ENCODE measurements at regions of chr10 and their contacts with region 1.

Region 1: DNA sequence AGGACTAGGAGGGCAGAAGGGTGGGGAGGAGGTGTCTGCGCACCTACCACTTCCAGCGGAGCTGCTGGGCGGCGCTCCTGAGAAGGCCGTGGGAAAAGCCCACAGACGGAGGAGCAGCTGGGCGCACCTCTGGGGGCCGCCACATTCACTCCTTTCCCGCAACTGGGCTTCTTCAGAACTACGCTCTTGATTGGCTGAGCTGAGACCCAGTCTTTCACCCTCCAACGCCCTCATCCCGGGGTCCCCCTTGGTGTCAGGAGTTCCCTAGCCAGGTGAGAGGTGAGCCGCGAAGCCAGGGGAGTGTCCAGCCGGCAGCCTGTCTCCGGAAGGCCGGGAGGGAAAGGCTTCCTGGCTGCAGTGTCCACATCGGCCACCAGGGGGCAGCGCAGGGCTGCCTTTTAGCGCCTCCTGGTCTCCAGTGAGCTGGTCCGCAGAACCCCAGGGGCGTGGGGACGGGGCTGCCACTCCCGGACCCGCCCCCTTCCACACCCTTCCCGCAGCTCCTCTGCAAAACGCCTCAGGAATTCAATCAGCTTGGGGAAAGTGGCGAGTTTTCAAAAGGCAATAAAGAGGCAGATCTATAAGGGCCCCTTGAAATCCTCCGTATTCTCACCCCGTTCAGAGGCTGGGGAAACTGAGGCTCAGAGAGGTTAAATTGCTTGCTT is 98.8 kb downstream of the CHST15 start:
- DNase-seq: peak; percentile 95
- H3K4me3 Mint-ChIP-seq: peak overlapping the region; percentile 55
- H3K27ac Mint-ChIP-seq: no peak overlapping the region
- H3K4me1 Mint-ChIP-seq: peaks cover 6% of the 10 kb centered on the region
- H3K27me3 Mint-ChIP-seq: peaks cover 62% of the 10 kb centered on the region

Region 2: DNA sequence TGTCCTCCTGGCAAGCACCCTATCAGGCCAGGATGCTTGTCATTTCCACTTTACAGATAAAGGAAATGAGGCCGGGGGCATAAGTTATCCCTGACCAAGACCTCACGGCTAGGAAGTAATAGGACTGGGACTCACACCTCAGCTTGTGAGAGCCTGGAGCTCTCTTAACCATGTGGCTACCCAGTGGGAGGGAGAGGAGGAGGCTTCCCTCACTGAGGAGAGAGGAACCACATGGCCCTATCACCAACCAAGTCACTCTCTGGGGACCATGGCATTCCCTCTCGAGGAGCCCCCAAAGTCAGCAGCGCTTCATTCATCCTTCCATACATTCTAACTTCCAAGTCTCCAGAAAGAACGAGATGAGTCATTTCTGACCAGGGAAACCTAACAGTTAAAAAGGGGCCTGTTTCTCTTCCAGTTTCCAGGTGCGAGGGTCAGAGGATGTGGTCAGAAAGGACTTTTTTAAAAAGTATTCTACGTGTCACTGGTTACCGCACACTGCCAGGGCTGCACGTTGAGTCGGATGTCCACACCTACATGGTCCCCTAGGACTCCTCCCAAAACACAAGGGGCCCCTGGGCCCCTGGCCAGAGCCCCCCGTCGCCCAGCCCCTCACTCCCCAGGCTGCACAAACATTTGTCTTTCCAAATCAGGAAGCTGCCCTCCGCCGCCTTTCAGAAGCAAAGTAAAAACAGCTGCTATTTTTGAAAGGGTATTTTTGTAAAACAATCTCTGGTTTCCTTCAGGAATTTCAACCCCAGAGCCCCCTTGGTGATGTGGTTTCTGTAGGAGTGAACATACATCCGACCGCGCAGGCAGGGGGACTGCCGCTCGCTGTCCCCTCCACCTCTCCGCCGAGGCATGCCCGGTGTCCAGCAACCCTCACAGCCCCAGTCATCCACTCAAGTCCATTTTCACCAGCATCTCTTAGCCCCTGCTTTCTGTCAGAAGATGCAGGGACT is 227.1 kb after region 1 on chr10:
- intact Hi-C with region 1: loop called (anchors 10 kb)
- DNase-seq: peak; percentile 68
- H3K4me3 Mint-ChIP-seq: peak overlapping the region; percentile 34
- H3K27ac Mint-ChIP-seq: no peak overlapping the region
- H3K4me1 Mint-ChIP-seq: peaks cover 23% of the 10 kb centered on the region
- H3K27me3 Mint-ChIP-seq: peaks cover 7% of the 10 kb centered on the region

Region 3: DNA sequence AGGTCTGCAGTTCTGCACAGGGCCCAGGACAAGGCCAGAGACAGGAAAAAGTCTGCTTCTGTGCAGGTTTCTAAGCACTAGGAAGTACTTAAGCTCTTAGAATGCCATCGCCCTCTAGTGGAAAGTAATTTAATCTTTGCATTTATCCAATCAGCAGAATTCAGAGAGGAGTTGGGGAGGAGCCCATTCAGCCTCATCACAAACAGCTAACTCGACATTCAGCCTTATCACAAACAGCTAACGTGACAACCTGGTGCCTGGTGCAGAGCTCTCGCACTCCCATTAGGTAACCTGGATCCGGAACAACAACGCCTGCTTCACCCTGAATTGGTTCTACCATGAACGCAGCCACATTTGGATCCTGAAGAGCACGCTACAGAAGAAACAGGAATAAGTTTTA is 409.0 kb after region 1 on chr10:
- intact Hi-C with region 1: loop called (anchors 1 kb)
- DNase-seq: peak; percentile 83
- H3K4me3 Mint-ChIP-seq: no peak overlapping the region
- H3K27ac Mint-ChIP-seq: no peak overlapping the region
- H3K4me1 Mint-ChIP-seq: peaks cover 8% of the 10 kb centered on the region
- H3K27me3 Mint-ChIP-seq: no peaks in the 10 kb centered on the region

Measured in activated CD4-positive, alpha-beta T cell treated with anti-CD3 and anti-CD28 coated beads, Interleukin-2, amount 10 ng/mL, durations not matched to agents 24 days and 14 days (primary cell).